Cardiac septum (tissue), 1 donor: ENCODE measurements at regions of chr11 and their contacts with region 1.

Region 1: GRCh38 chr11:43358801-43359421 is at the start of gene TTC17:
- DNase-seq: peak; percentile 98
- total RNA-seq, gene TTC17: 32.1 TPM

Region 2: GRCh38 chr11:43311791-43312607 is 46.9 kb before region 1 on chr11 and contains the start of gene API5:
- intact Hi-C with region 1: loop called (anchors 5 kb)
- DNase-seq: peak; percentile 95
- total RNA-seq, gene API5: 38.8 TPM